GM12878 (cell line): ENCODE measurements at regions of chr3 and their contacts with region 1.

Region 1: DNA sequence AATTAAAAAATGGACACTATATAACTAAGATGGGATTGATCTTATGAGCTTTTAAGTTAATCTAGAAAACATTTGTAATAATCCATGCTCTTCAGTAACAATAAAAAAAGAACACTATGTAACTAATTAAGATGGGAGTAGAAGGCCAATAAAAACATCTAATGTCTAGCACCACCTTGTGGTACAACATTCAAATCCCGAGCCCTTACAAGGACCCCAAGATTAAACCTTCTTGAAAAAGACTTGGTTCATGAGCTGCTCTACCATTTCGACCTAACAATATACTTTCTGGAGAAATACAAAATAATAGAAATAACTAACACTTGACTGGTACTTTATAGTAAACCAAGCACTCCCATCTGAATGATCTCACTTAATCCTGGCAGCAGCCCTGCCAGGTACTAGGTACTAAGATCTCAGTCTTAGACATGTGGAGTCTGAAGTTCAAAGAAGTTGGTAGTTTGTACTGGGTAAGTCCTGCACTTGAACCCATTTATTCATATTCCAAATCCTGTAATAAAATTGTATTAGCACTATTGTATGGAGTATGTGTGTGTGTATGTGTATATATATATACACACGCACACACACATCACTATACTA is 21.8 kb downstream of the METTL6 start:
- DNase-seq: no peak
- ATAC-seq: peak; percentile 97
- H3K4me3 ChIP-seq: no peak overlapping the region
- H3K27ac ChIP-seq: no peak overlapping the region
- H3K4me1 ChIP-seq: peaks cover 5% of the 10 kb centered on the region
- H3K27me3 ChIP-seq: no peaks in the 10 kb centered on the region
- CTCF ChIP-seq: peak; percentile 44 to 75 (median 58); a peak in 5 of 6 replicates
- EP300 ChIP-seq: no peak
- POLR2A ChIP-seq: no peak
- RAD21 ChIP-seq: peak; percentile 69

Region 2: GRCh38 chr3:14921078-14921616 is 484.4 kb before region 1 on chr3:
- CTCF ChIA-PET with region 1: interaction called, 11 read pairs
- POLR2A ChIA-PET with region 1: no interaction called
- RAD21 ChIA-PET with region 1: no interaction called
- SMC1A ChIA-PET with region 1: no interaction called
- in situ Hi-C with region 1: no loop called
- intact Hi-C with region 1: no loop called
- DNase-seq: no peak
- ATAC-seq: peak; percentile 97
- H3K4me3 ChIP-seq: no peak overlapping the region
- H3K27ac ChIP-seq: no peak overlapping the region
- H3K4me1 ChIP-seq: no peaks in the 10 kb centered on the region
- H3K27me3 ChIP-seq: no peaks in the 10 kb centered on the region
- CTCF ChIP-seq: peak; percentile 97 to 99 (median 98); a peak in 5 of 6 replicates
- EP300 ChIP-seq: no peak
- POLR2A ChIP-seq: no peak
- RAD21 ChIP-seq: peak; percentile 98

Region 3: GRCh38 chr3:15199493-15200105 is 205.9 kb before region 1 on chr3:
- CTCF ChIA-PET with region 1: interaction called, 108 read pairs
- POLR2A ChIA-PET with region 1: no interaction called
- RAD21 ChIA-PET with region 1: interaction called, 48 read pairs
- SMC1A ChIA-PET with region 1: interaction called, 135 read pairs
- in situ Hi-C with region 1: loop called (anchors 5 kb)
- intact Hi-C with region 1: loop called (anchors 1 kb)
- DNase-seq: no peak
- ATAC-seq: no peak
- H3K4me3 ChIP-seq: no peak overlapping the region
- H3K27ac ChIP-seq: no peak overlapping the region
- H3K4me1 ChIP-seq: no peaks in the 10 kb centered on the region
- H3K27me3 ChIP-seq: no peaks in the 10 kb centered on the region; a peak in 1 of 4 replicates
- CTCF ChIP-seq: no peak
- EP300 ChIP-seq: no peak
- POLR2A ChIP-seq: no peak
- RAD21 ChIP-seq: no peak

Region 4: GRCh38 chr3:15241341-15241740 is 164.2 kb before region 1 on chr3:
- CTCF ChIA-PET with region 1: interaction called, 30 read pairs
- POLR2A ChIA-PET with region 1: interaction called, 3 read pairs
- RAD21 ChIA-PET with region 1: interaction called, 10 read pairs
- SMC1A ChIA-PET with region 1: interaction called, 10 read pairs
- in situ Hi-C with region 1: no loop called
- intact Hi-C with region 1: no loop called
- DNase-seq: no peak
- ATAC-seq: peak; percentile 88
- H3K4me3 ChIP-seq: no peak overlapping the region
- H3K27ac ChIP-seq: no peak overlapping the region
- H3K4me1 ChIP-seq: no peaks in the 10 kb centered on the region
- H3K27me3 ChIP-seq: no peaks in the 10 kb centered on the region
- CTCF ChIP-seq: peak; percentile 36 to 54 (median 47); a peak in 5 of 6 replicates
- EP300 ChIP-seq: no peak
- POLR2A ChIP-seq: no peak
- RAD21 ChIP-seq: peak; percentile 55

Region 5: GRCh38 chr3:15361494-15362212 is 43.9 kb before region 1 on chr3:
- CTCF ChIA-PET with region 1: interaction called, 26 read pairs
- POLR2A ChIA-PET with region 1: no interaction called
- RAD21 ChIA-PET with region 1: interaction called, 15 read pairs
- SMC1A ChIA-PET with region 1: interaction called, 5 read pairs
- in situ Hi-C with region 1: no loop called
- intact Hi-C with region 1: no loop called
- DNase-seq: peak; percentile 99
- ATAC-seq: peak; percentile 82
- H3K4me3 ChIP-seq: peak overlapping the region; percentile 40; the same call in 1 of the 2 replicates
- H3K27ac ChIP-seq: peak overlapping the region; percentile 84
- H3K4me1 ChIP-seq: peaks cover 47% of the 10 kb centered on the region
- H3K27me3 ChIP-seq: no peaks in the 10 kb centered on the region
- CTCF ChIP-seq: no peak
- EP300 ChIP-seq: peak in 1 of 2 experiments; percentile 98
- POLR2A ChIP-seq: peak; percentile 63
- RAD21 ChIP-seq: peak; percentile 2

Region 6: DNA sequence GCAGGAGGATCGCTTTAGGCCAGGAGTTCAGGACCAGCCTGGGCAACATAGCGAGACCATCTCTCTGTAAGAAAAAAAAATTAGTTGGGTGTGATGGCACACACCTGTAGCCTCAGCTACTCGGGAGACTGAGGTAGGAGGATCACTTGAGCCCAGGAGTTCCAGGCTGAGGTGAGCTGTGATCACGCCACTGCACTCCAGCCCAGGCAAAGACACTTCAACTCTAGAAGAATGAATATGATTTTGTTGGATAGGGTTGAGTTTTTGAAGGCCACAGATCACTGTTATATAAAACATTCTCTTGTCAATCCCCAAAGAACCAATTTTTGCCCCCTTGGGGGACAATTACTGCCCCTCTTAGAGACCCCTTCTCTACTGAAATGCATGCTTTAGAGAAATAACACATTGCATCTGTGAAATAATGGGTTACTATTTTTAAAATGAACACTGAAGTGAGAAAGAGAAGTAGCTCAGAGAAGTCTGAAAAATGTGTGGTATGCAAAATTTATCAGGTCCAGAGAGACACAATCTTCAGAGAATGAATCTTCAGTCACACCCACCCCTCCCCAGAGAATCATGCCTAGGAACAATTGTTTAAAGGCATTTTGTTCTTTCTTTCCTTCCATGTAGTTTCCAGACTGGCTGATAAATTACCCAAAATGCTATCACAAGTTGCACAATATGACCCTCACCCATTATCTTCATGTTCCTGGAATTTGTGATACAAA is 20.9 kb before region 1 on chr3:
- CTCF ChIA-PET with region 1: interaction called, 45 read pairs
- POLR2A ChIA-PET with region 1: interaction called, 5 read pairs
- RAD21 ChIA-PET with region 1: interaction called, 19 read pairs
- SMC1A ChIA-PET with region 1: interaction called, 59 read pairs
- in situ Hi-C with region 1: no loop called
- intact Hi-C with region 1: no loop called
- DNase-seq: peak; percentile 84
- ATAC-seq: peak; percentile 87
- H3K4me3 ChIP-seq: peak overlapping the region; percentile 48; the same call in 1 of the 2 replicates
- H3K27ac ChIP-seq: peak overlapping the region; percentile 93
- H3K4me1 ChIP-seq: peaks cover 66% of the 10 kb centered on the region
- H3K27me3 ChIP-seq: no peaks in the 10 kb centered on the region
- CTCF ChIP-seq: no peak
- EP300 ChIP-seq: peak; percentile 86 to 93
- POLR2A ChIP-seq: no peak
- RAD21 ChIP-seq: 0 out of 2 replicates have a peak, but pooled peaks have one; percentile 1

Region 7: DNA sequence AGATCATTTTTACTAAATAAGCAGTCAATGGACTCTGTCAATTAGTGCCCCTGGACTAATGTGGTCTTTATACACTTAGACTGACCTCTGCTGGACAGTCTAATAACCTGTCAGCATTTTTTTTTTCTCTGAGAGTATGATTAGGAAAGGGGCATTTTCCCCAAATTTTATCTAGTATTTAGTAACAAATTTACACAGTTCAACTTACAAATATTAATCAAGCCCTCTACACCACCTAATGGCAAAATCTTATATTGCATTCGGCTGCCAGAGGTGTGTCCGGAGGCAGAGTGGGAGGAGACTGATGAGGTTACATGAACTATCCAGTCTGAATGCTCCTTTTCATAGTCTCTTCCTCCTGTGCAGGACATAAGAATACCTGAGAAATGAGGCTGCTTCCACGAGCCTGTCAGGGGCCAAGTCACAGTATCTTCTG is 152.0 kb after region 1 on chr3:
- CTCF ChIA-PET with region 1: interaction called, 68 read pairs
- POLR2A ChIA-PET with region 1: no interaction called
- RAD21 ChIA-PET with region 1: interaction called, 19 read pairs
- SMC1A ChIA-PET with region 1: interaction called, 45 read pairs
- in situ Hi-C with region 1: no loop called
- intact Hi-C with region 1: loop called (anchors 5 kb)
- DNase-seq: peak; percentile 67
- ATAC-seq: peak; percentile 88
- H3K4me3 ChIP-seq: no peak overlapping the region
- H3K27ac ChIP-seq: no peak overlapping the region
- H3K4me1 ChIP-seq: peaks cover 13% of the 10 kb centered on the region
- H3K27me3 ChIP-seq: no peaks in the 10 kb centered on the region
- CTCF ChIP-seq: peak; percentile 37 to 64 (median 55); a peak in 4 of 6 replicates
- EP300 ChIP-seq: no peak
- POLR2A ChIP-seq: no peak
- RAD21 ChIP-seq: peak; percentile 52